H1 (cell line): ENCODE measurements at regions of chr4 and their contacts with region 1.

Region 1: DNA sequence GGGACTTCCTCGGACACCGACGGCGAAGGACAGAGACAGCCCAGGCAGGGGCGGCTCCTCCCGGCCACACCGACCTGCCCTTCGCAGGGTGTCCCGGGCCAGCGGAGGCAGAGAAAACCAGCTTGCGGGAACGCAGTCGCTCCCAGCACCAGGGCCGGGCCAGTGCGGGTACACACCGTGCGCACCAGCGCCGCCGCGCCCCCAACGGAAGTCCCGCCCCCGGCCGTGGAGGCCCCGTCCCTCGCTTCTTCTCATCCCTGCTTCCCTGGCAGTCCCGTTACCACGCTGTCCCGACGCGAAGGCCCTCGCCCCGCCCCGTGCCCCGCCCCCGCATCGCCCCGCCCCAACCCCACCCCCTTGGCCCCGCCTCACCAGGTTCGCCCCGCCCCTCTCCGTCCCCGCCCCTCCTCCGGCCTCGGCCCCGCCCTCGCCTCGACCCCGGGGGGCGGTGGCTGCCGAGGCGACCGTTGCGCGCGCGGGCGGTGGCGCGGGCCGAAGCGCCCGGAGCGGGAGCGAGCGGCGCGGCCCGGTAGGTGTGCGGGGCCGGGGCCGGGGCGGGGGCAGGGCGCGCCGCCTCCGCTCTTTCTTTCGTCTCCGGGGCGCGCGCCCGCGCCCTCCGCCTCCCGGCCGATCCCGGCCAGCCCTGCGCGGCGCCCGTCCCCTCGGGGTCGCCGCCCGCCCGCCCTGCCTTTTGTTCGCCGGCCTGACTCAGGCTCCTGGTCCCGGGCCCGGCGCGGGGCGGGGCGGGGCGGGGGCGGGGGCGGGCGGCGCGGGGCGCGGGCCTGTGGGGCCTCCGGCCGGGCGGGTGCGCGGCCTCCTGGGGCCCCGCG is at the start of gene RGS12:
- DNase-seq: peak; percentile 63 to 95
- H3K4me3 ChIP-seq: peak within 1 kb of the TSS; percentile 68 to 86 (median 80)
- H3K27ac ChIP-seq: no peak within 1 kb of the TSS
- H3K4me1 ChIP-seq: peaks cover 0 to 23% (median 11%) of the 10 kb centered on the region in 4 experiments; a peak in 5 of 7 replicates
- H3K27me3 ChIP-seq: peaks cover 0 to 12% (median 1%) of the 10 kb centered on the region in 4 experiments; a peak in 3 of 7 replicates
- CTCF ChIP-seq: no peak
- EP300 ChIP-seq: no peak
- POLR2A ChIP-seq: no peak
- RAD21 ChIP-seq: no peak
- total RNA-seq, gene RGS12: 16.3 and 16.4 TPM in 2 replicates

Region 2: DNA sequence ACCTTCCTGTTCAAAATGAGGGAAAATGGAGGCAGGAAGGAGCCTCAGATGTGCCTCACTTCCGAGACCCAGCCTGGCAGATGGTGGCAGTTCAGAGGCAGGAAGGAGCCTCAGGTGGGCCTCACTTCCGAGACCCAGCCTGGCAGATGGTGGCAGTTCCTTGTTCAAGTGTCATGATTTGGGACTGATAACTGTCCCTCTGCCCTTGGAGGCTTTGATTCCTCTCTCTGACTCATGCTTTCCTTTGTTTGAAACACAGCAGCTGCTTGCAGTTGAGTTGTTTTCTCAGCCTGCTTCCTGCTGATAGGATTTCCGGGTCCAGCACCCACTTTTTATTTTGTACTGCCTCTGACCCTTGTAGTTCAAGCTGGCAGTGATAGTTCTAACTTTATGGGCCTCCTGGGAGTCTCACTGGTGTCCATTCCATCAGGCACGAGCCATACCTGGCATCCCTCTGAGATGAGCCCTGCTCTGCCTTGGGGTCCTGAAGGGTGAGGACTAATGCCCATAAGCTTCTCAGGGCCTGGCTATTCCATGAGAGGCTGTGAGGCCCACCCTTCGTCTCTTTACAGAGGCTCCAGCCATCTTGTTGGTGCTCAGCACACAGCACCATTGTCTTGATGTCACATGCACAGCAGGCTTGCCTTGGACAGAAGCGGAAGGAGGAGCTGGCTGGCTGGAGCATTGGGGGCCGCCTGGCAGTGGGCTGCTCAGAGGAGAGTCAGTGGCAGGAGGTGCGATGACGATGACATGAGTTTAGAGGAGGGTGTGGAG is 13.0 kb after region 1 on chr4:
- CTCF ChIA-PET with region 1: no interaction called
- POLR2A ChIA-PET with region 1: interaction called, 16 read pairs
- DNase-seq: no peak
- H3K4me3 ChIP-seq: no peak overlapping the region
- H3K27ac ChIP-seq: no peak overlapping the region
- H3K4me1 ChIP-seq: peaks cover 0 to 18% (median 6%) of the 10 kb centered on the region in 4 experiments; a peak in 4 of 7 replicates
- H3K27me3 ChIP-seq: no peaks in the 10 kb centered on the region
- CTCF ChIP-seq: no peak
- EP300 ChIP-seq: no peak
- POLR2A ChIP-seq: no peak
- RAD21 ChIP-seq: no peak